ENCODE measurements at regions of chr14 and their contacts with region 1.

Region 1: GRCh38 chr14:78848234-78848820 is 678.2 kb downstream of the NRXN3 start:
- DNase-seq: peak in 1 of 2 experiments; percentile 70
- H3K4me3 ChIP-seq: no peak overlapping the region
- H3K27ac ChIP-seq: no peak overlapping the region
- H3K4me1 ChIP-seq: peaks cover 1 to 14% (median 6%) of the 10 kb centered on the region in 4 experiments; a peak in 4 of 7 replicates
- H3K27me3 ChIP-seq: no peaks in the 10 kb centered on the region
- CTCF ChIP-seq: peak; percentile 65 to 96 (median 81)
- EP300 ChIP-seq: no peak
- POLR2A ChIP-seq: no peak
- RAD21 ChIP-seq: peak; percentile 67 to 71

Region 2: GRCh38 chr14:78790271-78790670 is 58.1 kb before region 1 on chr14:
- CTCF ChIA-PET with region 1: interaction called, 27 read pairs
- POLR2A ChIA-PET with region 1: no interaction called
- DNase-seq: no peak
- H3K4me3 ChIP-seq: no peak overlapping the region
- H3K27ac ChIP-seq: no peak overlapping the region
- H3K4me1 ChIP-seq: peaks cover 0 to 3% (median 0%) of the 10 kb centered on the region in 4 experiments; a peak in 1 of 7 replicates
- H3K27me3 ChIP-seq: no peaks in the 10 kb centered on the region
- CTCF ChIP-seq: peak; percentile 13 to 71 (median 52)
- EP300 ChIP-seq: no peak
- POLR2A ChIP-seq: no peak
- RAD21 ChIP-seq: peak; percentile 48 to 54

Region 3: DNA sequence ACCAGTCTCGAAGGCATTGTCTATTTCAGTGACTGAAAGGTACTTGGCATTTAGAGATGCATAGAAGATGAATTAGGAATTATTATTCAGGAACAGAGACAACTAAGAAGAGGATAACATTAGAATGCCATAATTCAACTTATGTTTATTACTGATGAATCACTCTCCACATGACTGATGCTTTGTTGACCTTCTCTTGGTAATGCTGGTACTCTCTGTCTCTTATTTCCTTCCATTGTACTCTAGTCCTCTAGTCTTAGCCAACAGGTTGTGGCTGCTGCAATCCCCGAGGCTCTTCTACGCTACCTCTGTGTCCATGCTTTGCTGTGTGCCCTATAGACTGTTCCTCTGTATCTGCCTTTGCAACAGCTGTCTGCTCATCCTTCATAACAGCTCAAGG is 25.3 kb before region 1 on chr14:
- CTCF ChIA-PET with region 1: interaction called, 12 read pairs
- POLR2A ChIA-PET with region 1: no interaction called
- DNase-seq: no peak
- H3K4me3 ChIP-seq: no peak overlapping the region
- H3K27ac ChIP-seq: no peak overlapping the region
- H3K4me1 ChIP-seq: no peaks in the 10 kb centered on the region
- H3K27me3 ChIP-seq: no peaks in the 10 kb centered on the region
- CTCF ChIP-seq: no peak
- EP300 ChIP-seq: no peak
- POLR2A ChIP-seq: no peak
- RAD21 ChIP-seq: no peak

Region 4: GRCh38 chr14:78836777-78837176 is 11.6 kb before region 1 on chr14:
- CTCF ChIA-PET with region 1: interaction called, 46 read pairs
- POLR2A ChIA-PET with region 1: no interaction called
- DNase-seq: peak; percentile 74 to 77
- H3K4me3 ChIP-seq: no peak overlapping the region
- H3K27ac ChIP-seq: no peak overlapping the region
- H3K4me1 ChIP-seq: peaks cover 0 to 2% (median 0%) of the 10 kb centered on the region in 4 experiments; a peak in 1 of 7 replicates
- H3K27me3 ChIP-seq: no peaks in the 10 kb centered on the region; a peak in 1 of 7 replicates
- CTCF ChIP-seq: peak; percentile 40 to 96 (median 80)
- EP300 ChIP-seq: peak in 1 of 2 experiments; percentile 8; a peak in 1 of 3 replicates
- POLR2A ChIP-seq: no peak
- RAD21 ChIP-seq: peak; percentile 92 to 96

Measured in H1 (cell line).